ENCODE measurements at regions of chr11 and their contacts with region 1.

Region 1: DNA sequence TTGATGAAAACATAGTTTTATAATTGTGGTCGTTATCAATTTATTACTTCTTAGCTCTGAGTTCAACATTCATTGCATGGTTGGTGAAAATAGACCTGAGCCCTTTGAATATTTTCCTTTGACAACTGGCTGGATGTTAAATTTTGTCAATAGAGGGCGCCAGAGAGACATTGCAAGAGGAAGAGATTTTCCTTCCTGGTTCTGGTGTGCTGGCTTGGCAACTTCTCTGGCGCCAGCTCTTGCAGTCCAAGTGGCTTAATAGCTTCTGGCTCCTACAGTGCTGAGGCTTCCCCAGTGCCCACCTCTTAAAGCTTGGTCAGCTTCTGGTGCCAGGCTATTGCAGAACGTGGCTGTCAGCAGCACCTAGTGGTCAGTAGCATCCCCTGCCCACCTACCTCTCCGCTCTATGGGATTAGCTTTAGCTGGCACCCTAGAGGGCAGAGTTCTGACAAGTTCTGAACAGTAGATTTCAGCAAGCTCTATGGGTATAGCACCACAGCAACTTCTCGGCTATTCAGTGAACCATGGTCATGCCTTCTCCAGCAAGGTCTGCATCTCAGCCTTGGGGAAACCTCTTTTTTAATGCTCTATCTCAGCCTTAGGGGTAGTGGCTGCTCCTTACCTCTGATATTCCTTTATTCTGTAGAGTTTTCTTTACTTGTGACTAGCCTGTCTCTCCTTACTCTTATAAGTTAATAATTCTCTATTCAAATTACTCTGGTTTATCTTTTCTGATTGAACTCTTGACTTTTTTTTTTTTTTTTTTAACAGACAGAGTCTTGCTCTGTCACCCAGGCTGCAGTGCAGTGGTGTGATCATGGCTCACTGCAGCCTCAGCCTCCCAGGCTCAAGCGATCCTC is 59.4 kb downstream of the ACER3 start:
- DNase-seq: peak; percentile 36
- H3K4me3 ChIP-seq: no peak overlapping the region
- CTCF ChIP-seq: peak; percentile 67

Region 2: DNA sequence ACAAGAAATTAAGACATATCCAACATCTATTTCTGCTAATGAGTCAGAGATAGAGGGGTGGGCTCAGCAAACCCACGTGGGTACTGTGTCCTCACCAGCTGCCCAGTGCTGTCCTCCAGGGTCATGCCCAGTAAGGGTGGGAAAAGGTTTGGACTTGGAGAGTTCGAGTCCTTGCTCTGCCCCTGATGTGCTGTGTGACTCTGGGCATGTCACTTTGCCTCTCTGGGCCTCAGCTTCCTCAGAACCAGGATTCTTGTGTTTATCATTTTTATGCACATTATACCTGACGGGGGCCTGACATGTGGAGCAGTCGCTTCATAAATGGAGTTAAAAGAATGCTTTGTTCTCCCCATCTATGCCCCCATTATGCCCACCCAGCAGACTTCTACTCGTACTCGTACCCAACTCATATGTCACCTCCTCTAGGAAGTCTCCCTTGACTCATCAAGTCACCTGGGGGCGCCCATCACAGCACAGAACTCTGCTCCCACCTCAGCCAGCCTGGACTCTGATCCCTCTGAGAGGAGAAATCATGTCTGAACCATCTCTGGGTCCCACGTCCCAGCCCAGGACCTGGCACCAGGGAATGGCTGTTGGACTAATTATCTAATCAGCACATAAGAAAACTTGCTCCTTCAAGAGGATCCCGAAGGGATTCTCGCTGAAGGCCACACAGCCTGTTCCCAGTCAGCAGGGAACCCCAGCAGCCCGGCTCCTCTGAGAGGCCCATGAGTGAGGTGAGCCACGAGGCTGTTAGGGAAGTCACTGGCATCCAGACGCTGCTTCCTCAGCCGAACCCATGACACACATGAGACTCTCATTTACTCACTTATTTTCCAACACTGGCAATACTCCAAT is 175.7 kb before region 1 on chr11:
- CTCF ChIA-PET with region 1: interaction called, 220 read pairs
- POLR2A ChIA-PET with region 1: no interaction called
- DNase-seq: no peak
- H3K4me3 ChIP-seq: no peak overlapping the region
- CTCF ChIP-seq: no peak

Region 3: DNA sequence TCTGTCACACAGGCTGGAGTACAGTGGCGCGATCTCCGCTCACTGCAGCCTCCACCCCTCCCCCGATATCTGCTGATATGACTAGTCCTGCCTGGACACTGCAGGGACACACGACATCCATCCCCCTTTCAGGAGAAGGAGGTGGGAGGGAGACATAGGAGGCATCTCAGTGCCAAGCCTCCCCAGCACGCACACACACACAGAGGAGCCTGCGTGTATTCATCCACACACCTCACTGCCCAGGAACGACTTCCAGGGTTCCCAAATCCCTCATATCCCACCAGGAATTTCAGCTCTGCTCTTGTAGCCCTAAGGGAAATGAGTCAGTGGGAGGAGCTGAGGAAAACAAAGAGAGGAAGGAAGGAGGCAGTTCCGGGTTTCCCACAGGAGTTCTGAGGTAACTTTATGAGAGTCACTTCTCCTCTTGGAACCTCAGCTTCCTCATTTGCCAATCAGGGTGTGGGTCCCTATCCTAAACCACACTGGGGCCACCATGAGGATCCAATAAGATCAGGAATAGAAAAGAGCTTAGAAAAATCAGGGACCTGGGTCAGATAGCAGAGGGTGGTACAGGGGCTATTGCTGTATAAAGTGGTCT is 96.5 kb before region 1 on chr11:
- CTCF ChIA-PET with region 1: interaction called, 29 read pairs
- POLR2A ChIA-PET with region 1: no interaction called
- DNase-seq: no peak
- H3K4me3 ChIP-seq: no peak overlapping the region
- CTCF ChIP-seq: no peak

Region 4: DNA sequence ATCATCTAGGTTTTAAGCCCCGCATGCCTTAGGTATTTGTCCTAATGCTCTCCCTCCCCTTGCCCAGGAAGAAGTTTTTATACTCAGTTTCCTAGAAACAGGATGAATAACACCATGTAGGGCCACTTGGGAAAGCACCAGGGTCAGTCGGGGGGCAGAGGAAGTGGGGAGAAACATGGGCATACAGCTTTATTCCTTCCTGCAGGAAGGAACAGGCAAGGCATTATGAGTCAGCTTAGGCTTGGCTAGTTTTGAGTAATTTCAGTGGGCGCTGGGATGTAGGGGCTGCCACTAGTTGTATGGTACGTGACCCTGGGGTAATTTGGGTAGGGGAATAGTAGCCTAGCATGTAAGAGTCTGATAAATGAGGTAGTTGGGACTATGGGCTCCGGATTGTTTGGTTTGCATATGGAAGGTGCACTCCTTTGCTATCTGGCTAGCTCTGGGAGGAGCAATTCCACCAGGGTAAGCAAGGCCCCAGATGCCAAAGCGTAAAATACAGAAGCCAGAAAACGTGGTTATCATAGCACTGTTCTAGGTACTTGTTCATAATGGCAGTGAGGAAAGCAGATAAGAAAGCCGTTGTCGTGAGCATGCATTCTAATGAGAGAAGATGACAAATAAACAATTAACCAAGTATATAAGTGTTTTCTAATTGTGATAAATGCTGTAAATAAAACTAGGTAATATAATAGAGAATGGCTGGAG is 34.6 kb before region 1 on chr11:
- CTCF ChIA-PET with region 1: interaction called, 111 read pairs
- POLR2A ChIA-PET with region 1: no interaction called
- DNase-seq: no peak
- H3K4me3 ChIP-seq: no peak overlapping the region
- CTCF ChIP-seq: no peak

Region 5: GRCh38 chr11:76946245-76946644 is 26.1 kb after region 1 on chr11:
- CTCF ChIA-PET with region 1: interaction called, 36 read pairs
- POLR2A ChIA-PET with region 1: no interaction called
- DNase-seq: no peak
- H3K4me3 ChIP-seq: no peak overlapping the region
- CTCF ChIP-seq: no peak

Region 6: GRCh38 chr11:77047007-77047927 is 127.2 kb after region 1 on chr11:
- CTCF ChIA-PET with region 1: interaction called, 12 read pairs
- POLR2A ChIA-PET with region 1: no interaction called
- DNase-seq: peak; percentile 65
- H3K4me3 ChIP-seq: peak overlapping the region; percentile 52
- CTCF ChIP-seq: peak; percentile 48

Region 7: DNA sequence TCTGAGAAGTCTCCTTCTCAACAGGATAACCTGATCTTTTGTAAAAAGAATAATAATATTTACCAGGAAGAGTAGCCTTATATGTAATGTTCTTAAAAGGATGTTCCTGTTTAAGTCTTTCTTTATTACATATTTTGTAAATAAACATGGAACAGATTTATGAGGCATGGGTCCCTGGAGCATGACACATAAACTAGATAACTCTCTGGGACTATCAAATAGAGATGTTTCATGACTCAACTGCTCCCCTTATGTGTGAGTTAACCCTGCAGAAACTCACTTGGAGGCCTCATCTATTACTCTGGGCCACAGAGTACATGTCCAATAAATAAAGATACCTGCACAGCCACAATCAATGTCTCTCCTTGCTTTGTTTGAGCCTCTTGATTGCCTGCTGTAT is 316.8 kb after region 1 on chr11:
- CTCF ChIA-PET with region 1: no interaction called
- POLR2A ChIA-PET with region 1: no interaction called
- DNase-seq: no peak
- H3K4me3 ChIP-seq: no peak overlapping the region
- CTCF ChIP-seq: no peak

Measured in AG04449 (cell line).